Ascending aorta (tissue), 2 donors: ENCODE measurements at regions of chr1 and their contacts with region 1.

Region 1: DNA sequence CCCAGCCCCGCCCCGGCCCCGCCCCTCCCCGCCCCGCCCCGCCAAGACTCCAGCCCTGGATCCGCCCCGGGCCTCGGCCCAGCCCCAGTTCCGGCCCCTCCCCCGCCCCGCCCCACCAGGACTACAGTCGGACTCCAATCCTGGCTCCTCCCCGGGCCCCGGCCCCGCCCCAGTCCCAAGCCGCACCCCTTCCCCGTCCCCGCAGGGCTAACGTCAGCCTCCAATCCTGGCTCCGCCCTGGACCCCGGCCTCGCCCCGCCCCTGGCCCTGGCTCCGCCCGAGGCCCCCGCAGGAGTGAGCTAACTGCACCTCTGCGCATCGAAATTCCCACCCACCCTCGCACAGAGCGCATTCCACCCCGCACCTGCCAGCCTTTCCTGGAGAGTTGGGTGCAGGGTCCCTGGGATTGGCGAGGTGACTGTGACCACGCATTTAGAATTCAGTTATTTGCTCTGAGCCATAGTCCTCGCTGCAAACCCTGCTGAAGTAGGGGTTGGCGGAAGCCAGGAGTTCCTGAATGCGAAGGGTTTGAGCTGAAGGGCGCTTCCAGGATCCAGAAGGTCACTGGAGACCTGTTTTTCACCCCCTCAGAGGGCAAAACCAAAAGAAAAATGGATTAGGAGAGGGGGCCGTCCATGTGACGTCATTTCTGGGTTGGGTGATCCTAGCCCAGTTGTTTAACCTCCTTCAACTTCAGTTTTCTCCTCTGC is 588 bp upstream of the IGSF8 start:
- DNase-seq: peak; percentile 89 to 99
- H3K4me3 ChIP-seq: peak overlapping the region; percentile 69 to 85
- H3K27ac ChIP-seq: peak overlapping the region; percentile 93 to 99
- H3K4me1 ChIP-seq: peaks cover 26 to 40% of the 10 kb centered on the region in 2 donors
- H3K27me3 ChIP-seq: no peaks in the 10 kb centered on the region
- CTCF ChIP-seq: no peak

Region 2: GRCh38 chr1:159869173-159869572 is 229.8 kb before region 1 on chr1:
- intact Hi-C with region 1: no loop called
- DNase-seq: no peak
- H3K4me3 ChIP-seq: no peak overlapping the region
- H3K27ac ChIP-seq: no peak overlapping the region
- H3K4me1 ChIP-seq: no peaks in the 10 kb centered on the region
- H3K27me3 ChIP-seq: no peaks in the 10 kb centered on the region
- CTCF ChIP-seq: no peak

Region 3: GRCh38 chr1:159924981-159925712 is 173.9 kb before region 1 on chr1 and contains the start of gene TAGLN2:
- intact Hi-C with region 1: loop called (anchors 5 kb)
- DNase-seq: peak; percentile 76 to 95
- H3K4me3 ChIP-seq: peak within 1 kb of the TSS; percentile 74 to 83
- H3K27ac ChIP-seq: peak within 1 kb of the TSS; percentile 96 to 98
- H3K4me1 ChIP-seq: peaks cover 6 to 20% of the 10 kb centered on the region in 2 donors
- H3K27me3 ChIP-seq: no peaks in the 10 kb centered on the region
- CTCF ChIP-seq: no peak
- total RNA-seq, gene TAGLN2: 363 TPM

Region 4: DNA sequence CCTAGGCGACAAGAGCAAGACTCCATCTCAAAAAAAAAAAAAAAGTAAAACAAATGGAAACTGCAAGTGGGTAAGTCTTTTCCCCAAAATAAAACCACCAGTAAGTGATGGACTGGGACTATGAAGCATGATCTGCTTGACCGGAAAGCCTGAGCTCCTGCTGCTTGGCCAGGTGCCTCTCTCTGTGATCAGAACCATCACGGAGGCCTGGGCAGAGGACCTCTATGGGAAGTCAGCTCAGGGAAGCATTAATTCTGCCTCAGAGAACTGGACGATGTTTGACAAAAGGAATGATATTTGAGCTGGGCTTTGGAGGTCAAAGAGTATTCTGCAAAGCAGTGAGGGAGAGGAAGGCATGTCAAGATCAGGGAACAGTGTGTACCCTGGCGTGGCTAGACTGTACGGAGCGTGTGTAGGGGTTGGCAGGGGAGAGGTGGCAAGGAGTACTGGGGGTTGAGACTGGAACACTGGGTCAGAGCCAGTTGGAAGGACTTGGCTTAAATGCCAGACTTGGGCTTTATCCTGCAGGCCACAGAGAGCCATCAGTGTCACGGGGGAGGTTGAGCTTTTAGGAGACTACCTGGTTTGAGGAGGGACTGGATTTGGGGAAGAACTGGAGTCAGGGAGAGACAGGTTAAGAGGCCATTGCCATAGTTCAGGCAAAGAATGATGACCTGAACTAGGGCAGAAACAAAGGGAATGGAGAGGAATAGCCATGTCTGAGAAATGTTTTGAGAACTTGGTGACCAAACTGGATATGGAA is 33.0 kb after region 1 on chr1:
- intact Hi-C with region 1: loop called (anchors 2 kb)
- DNase-seq: peak; percentile 40 to 90
- H3K4me3 ChIP-seq: no peak overlapping the region
- H3K27ac ChIP-seq: peak overlapping the region; percentile 86 to 96
- H3K4me1 ChIP-seq: peaks cover 10 to 21% of the 10 kb centered on the region in 2 donors
- H3K27me3 ChIP-seq: no peaks in the 10 kb centered on the region
- CTCF ChIP-seq: no peak

Region 5: DNA sequence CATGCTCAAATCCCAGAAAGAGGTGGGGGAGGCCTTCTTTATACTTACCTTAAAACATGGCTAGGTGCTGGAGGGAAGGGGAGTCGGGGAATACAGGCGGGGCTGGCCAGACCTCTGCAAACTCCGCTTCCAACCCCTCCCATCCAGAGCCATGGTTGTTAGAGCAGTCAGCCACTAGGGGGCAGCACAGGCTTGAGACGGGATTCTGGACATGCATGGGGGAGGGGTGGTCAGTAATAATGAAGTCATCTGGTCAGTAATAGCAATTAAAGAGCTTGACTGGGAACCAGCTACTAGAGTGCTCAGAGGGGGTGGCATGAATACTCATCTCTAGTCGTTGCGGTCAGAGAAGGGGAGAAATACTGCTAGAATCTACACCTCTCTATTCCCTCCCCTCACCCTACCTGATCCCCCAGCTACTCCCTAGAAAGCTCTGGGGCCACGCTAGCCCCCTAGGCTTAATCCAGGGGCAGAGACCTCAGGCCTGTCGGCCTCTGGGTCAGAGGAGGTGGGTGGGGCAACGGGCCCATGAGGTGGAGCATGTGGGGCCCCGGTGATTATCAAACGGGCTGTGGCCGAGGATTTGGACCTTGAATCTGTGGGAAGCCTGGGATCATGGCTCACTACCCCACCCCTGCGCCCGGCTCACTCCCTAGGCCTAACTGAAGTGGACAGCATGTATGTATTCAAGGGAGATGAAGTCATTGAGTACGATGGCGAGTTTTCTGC is 94.2 kb after region 1 on chr1:
- intact Hi-C with region 1: loop called (anchors 1 kb)
- DNase-seq: peak; percentile 50 to 91
- H3K4me3 ChIP-seq: peak overlapping the region in 1 of 2 donors; percentile 43
- H3K27ac ChIP-seq: peak overlapping the region in 1 of 2 donors; percentile 54
- H3K4me1 ChIP-seq: peaks cover 9 to 20% of the 10 kb centered on the region in 2 donors
- H3K27me3 ChIP-seq: no peaks in the 10 kb centered on the region
- CTCF ChIP-seq: peak; percentile 91 to 97 (median 94)

Region 6: GRCh38 chr1:160251687-160252526 is 152.9 kb after region 1 on chr1:
- intact Hi-C with region 1: loop called (anchors 1 kb)
- DNase-seq: peak in 1 of 2 donors; percentile 82
- H3K4me3 ChIP-seq: no peak overlapping the region
- H3K27ac ChIP-seq: peak overlapping the region; percentile 13 to 61
- H3K4me1 ChIP-seq: peaks cover 0 to 21% of the 10 kb centered on the region in 2 donors
- H3K27me3 ChIP-seq: no peaks in the 10 kb centered on the region
- CTCF ChIP-seq: peak; percentile 68 to 71 (median 70)

Region 7: GRCh38 chr1:160284782-160285344 is 185.9 kb after region 1 on chr1 and contains the start of gene PEX19:
- intact Hi-C with region 1: loop called (anchors 1 kb)
- DNase-seq: peak; percentile 65 to 96
- H3K4me3 ChIP-seq: peak within 1 kb of the TSS; percentile 72 to 86
- H3K27ac ChIP-seq: peak within 1 kb of the TSS; percentile 82 to 87
- H3K4me1 ChIP-seq: peaks cover 4 to 16% of the 10 kb centered on the region in 2 donors
- H3K27me3 ChIP-seq: no peaks in the 10 kb centered on the region
- CTCF ChIP-seq: no peak
- total RNA-seq, gene PEX19: 36.6 TPM

Region 8: GRCh38 chr1:160342953-160343869 is 244.2 kb after region 1 on chr1 and contains the starts of genes COPA and NCSTN:
- intact Hi-C with region 1: loop called (anchors 5 kb)
- DNase-seq: peak; percentile 71 to 97
- H3K4me3 ChIP-seq: peak within 1 kb of the TSS; percentile 56 to 87
- H3K27ac ChIP-seq: peak within 1 kb of the TSS; percentile 89 to 92
- H3K4me1 ChIP-seq: peaks cover 0 to 20% of the 10 kb centered on the region in 2 donors
- H3K27me3 ChIP-seq: no peaks in the 10 kb centered on the region
- CTCF ChIP-seq: no peak
- total RNA-seq, gene COPA: 56.3 TPM
- total RNA-seq, gene NCSTN: 141 TPM